Dorsolateral prefrontal cortex (tissue), 120 donors: ENCODE measurements at regions of chr4 and their contacts with region 1.

Region 1: DNA sequence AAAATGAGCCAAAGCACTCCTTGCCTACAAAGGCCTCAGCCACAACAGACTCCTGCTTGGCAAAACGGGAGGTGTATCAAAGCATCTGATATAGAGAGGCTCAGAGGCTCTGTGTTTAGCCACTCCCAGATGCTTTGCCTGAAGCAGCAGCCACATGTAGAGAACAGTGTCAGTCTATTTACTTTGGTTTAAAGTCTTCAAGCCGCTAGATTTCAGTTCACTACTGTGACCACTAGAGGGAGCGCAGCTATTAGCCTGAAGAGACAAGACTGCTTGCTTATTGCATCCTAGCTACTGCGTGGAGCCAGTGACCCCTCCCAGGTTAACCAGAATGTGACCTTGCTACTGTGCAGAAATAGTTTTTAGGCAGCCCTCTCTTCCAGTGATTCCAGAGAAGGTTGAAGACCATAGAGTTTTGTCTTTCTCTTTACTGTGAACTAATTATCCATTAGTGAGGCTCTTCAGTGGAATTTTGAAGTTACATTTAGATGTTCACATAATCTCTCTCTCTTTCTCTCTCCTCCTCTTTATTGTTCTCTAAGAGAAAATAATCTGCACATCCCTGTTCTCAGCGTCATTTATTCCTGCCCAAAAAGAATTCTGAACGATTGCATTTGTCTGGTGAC is 39.3 kb downstream of the BMP3 start:
- DNase-seq: peak in 9 of 10 donors; percentile 41 to 89 (median 54)
- H3K4me3 ChIP-seq: no peak overlapping the region
- H3K27ac ChIP-seq: no peak overlapping the region
- H3K27me3 ChIP-seq: peaks cover 0 to 9% (median 0%) of the 10 kb centered on the region in 45 donors
- CTCF ChIP-seq: peak; percentile 73 to 97 (median 91)

Region 2: DNA sequence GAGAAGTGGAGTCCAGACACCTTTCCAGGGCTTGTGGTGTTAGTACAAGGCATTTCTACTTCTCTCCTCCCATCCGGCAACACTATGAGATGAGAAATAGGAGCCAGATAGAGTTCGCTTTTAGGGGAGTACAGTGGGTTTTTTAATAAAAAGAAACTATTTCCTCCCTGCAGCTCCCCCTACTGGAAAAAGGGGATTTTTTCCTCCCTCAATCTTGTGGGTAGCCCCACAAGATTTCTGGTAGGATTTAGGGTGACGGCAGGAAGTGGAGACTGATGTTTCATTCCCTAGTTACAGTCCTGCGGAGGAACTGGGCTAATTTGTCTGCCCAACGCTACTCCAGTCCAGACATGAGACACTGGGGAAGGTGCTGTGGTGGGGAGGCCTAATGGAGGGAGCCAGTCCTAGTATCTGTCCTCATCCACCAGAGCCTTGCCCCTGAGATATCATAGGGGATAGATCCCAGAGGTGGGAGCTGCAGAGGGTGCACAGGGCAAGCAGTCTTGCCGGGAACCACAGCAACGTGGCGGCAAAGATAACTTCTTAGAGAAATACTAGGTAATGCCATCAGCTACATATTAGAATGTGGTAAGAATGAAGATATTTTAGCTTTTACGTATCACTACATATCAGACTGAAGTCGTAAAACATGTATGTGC is 190.8 kb after region 1 on chr4:
- intact Hi-C with region 1: loop called in 1 of 2 experiments (anchors 10 kb)
- DNase-seq: no peak
- H3K4me3 ChIP-seq: no peak overlapping the region
- H3K27ac ChIP-seq: no peak overlapping the region
- H3K27me3 ChIP-seq: peaks cover 0 to 4% (median 0%) of the 10 kb centered on the region in 45 donors
- CTCF ChIP-seq: peak in 18 of 56 donors; percentile 9 to 41 (median 18)

Region 3: GRCh38 chr4:81351654-81352445 is 282.0 kb after region 1 on chr4:
- intact Hi-C with region 1: loop called (anchors 5 kb)
- DNase-seq: peak; percentile 54 to 88 (median 74)
- H3K4me3 ChIP-seq: no peak overlapping the region
- H3K27ac ChIP-seq: no peak overlapping the region
- H3K27me3 ChIP-seq: peaks cover 0 to 7% (median 0%) of the 10 kb centered on the region in 45 donors
- CTCF ChIP-seq: peak; percentile 68 to 91 (median 84)